H1 (cell line): ENCODE measurements at regions of chr9 and their contacts with region 1.

Region 1: DNA sequence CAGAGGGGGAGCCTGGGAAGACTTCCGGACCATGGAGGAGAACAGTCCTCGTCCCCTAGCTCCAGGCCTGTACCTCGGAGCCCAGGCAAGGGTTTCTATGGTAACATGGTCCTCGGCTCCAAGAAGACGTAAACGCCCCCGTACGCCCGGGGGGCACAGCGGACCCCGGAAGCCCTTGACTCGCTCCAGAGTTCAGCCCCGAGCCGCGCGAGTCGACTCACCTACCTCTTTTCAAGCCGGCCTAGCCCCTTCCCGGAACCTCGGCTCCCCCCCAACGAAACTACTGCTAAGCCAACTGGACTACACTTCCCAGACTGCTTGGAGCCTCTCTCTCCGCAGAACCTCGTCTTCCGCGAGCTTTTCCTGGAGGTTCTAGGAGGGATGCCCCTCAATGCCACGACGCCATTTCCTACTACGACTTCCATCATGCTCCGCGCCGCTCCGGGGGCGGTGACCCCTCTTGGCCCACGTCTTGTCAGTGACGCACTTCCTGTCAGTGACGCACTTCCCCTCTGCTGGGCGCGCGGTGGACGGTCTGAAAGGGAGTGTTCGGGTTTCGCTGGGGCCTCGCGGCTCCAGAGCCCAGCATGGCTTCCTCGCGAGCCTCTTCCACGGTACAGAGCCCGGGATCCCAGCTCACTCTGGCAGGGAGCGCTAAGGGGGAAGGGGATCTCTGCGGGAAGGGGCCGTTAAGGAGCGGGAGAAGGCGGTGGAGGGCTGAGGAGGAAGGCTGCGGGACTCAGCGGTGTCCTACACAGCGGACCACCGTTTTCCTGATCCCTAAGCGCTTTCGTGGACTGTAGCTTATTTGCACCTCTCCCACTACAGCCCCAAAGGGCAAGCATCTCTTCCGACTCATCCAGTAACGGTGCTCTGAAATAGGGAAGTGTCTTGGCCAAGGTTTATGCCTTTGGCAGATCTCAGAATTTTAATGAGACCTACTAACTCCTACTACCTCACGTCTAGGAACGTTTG is at the starts of genes CDC26 and PRPF4:
- DNase-seq: peak; percentile 89 to 92
- H3K4me3 ChIP-seq: peak within 1 kb of the TSS; percentile 68 to 98 (median 90)
- H3K27ac ChIP-seq: peak within 1 kb of the TSS; percentile 93
- H3K4me1 ChIP-seq: peaks cover 0 to 4% (median 0%) of the 10 kb centered on the region in 4 experiments; a peak in 1 of 7 replicates
- H3K27me3 ChIP-seq: no peaks in the 10 kb centered on the region
- CTCF ChIP-seq: no peak
- EP300 ChIP-seq: no peak
- POLR2A ChIP-seq: peak; percentile 93 to 96
- RAD21 ChIP-seq: no peak
- total RNA-seq, gene CDC26: 41.9 and 42.8 TPM in 2 replicates
- total RNA-seq, gene PRPF4: 33.4 and 36.8 TPM in 2 replicates

Region 2: DNA sequence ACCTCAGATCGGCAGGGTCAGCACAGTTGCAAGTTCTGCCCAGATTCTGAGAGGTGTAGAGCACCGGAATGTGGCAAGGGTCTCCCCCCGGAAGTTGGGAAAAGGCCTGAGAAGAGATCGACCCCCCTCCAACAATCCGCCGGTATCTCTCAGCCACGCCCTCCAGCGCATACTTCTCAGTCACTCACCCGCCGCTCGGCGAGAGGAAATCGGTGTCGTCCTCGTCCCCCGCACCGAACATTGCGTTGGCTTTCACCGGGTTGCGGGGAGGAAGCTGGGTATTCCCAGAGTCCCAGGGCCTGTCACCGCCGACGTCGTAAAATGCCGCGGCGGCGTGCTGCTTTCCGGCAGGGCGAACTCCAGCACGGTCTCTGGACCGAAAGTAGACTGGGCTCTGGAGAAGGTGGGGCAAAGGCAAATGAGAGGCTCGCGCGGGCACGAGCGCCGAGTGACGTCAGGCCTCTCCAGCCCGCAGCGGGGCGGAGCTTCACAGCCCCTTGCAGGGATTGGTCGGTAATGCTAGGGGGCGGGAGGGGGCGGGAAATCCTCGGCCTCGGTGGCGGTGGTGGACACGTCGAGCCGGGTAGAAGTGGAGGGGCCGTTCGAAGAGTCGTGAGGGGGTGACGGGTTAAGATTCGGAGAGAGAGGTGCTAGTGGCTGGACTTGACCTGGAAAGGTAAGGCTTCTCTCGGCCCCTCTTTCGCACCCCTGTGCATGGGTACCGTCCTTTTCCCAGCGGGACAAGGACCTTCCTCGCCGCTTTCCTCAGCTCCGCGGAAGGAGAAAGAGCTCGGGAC is 54.2 kb before region 1 on chr9 and contains the starts of genes FKBP15 and SLC31A1:
- CTCF ChIA-PET with region 1: interaction called, 10 read pairs
- POLR2A ChIA-PET with region 1: interaction called, 10 read pairs
- DNase-seq: peak; percentile 95 to 98
- H3K4me3 ChIP-seq: peak within 1 kb of the TSS; percentile 93 to 96 (median 94)
- H3K27ac ChIP-seq: peak within 1 kb of the TSS; percentile 71; the same call in 1 of the 2 replicates
- H3K4me1 ChIP-seq: peaks cover 0 to 10% (median 1%) of the 10 kb centered on the region in 4 experiments; a peak in 4 of 7 replicates
- H3K27me3 ChIP-seq: no peaks in the 10 kb centered on the region
- CTCF ChIP-seq: no peak
- EP300 ChIP-seq: no peak
- POLR2A ChIP-seq: peak; percentile 46 to 83
- RAD21 ChIP-seq: no peak
- total RNA-seq, gene FKBP15: 13.8 and 13.9 TPM in 2 replicates
- total RNA-seq, gene SLC31A1: 40.7 and 40.8 TPM in 2 replicates

Region 3: DNA sequence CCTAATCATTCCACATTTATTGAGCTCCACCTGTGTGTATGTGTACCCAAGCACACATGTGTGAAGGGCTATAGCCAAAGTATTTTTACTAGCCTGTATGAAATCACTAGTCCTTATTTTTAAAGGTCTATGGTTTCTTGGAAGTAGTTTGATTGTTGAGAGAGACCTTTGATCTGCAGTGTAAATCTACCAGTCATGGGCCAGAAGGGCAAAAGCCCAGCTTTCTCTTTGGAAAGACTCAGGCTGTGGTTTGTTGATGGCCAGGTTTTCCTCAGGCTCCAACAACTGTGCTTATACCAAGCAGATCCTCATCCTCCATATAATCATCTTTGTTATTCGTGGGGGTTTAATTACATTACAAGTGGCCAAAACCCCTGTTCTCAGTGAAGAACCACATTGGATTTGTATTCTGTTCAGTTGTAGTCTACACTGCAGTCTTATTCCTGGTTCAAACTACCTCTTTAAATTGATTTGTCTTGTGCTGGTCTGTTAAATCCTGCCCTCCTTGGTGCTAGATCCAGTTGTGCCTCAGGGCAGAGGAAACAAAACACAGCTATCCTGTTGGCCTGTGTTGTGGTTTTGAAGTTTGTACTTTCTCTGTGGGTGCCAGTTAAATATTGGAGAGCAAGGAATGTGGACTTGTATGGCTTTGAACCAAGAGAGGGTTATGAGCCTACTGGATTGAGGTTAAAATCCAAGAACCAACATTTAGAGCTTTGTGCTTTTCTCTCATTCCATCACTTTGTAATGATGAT is 13.3 kb before region 1 on chr9:
- CTCF ChIA-PET with region 1: interaction called, 22 read pairs
- POLR2A ChIA-PET with region 1: interaction called, 9 read pairs
- DNase-seq: no peak
- H3K4me3 ChIP-seq: no peak overlapping the region
- H3K27ac ChIP-seq: no peak overlapping the region
- H3K4me1 ChIP-seq: no peaks in the 10 kb centered on the region
- H3K27me3 ChIP-seq: no peaks in the 10 kb centered on the region
- CTCF ChIP-seq: no peak
- EP300 ChIP-seq: no peak
- POLR2A ChIP-seq: no peak
- RAD21 ChIP-seq: no peak

Region 4: GRCh38 chr9:113349445-113350094 is 74.1 kb after region 1 on chr9 and contains the start of gene BSPRY:
- CTCF ChIA-PET with region 1: interaction called, 11 read pairs
- POLR2A ChIA-PET with region 1: interaction called, 4 read pairs
- DNase-seq: peak in 1 of 2 experiments; percentile 76
- H3K4me3 ChIP-seq: peak within 1 kb of the TSS; percentile 75 to 89 (median 76)
- H3K27ac ChIP-seq: no peak within 1 kb of the TSS
- H3K4me1 ChIP-seq: peaks cover 5 to 14% (median 10%) of the 10 kb centered on the region in 4 experiments
- H3K27me3 ChIP-seq: peaks cover 0 to 14% (median 2%) of the 10 kb centered on the region in 4 experiments; a peak in 5 of 7 replicates
- CTCF ChIP-seq: no peak
- EP300 ChIP-seq: no peak
- POLR2A ChIP-seq: peak in 1 of 2 experiments; percentile 49; a peak in 1 of 3 replicates
- RAD21 ChIP-seq: 0 out of 4 replicates have a peak, but pooled peaks of 1 of the 2 experiments have one; percentile 0
- total RNA-seq, gene BSPRY: 5.5 and 6.5 TPM in 2 replicates

Region 5: GRCh38 chr9:113410207-113410864 is 134.9 kb after region 1 on chr9 and contains the starts of genes C9orf43 and POLE3:
- CTCF ChIA-PET with region 1: interaction called, 17 read pairs
- POLR2A ChIA-PET with region 1: interaction called, 12 read pairs
- DNase-seq: peak; percentile 78 to 94
- H3K4me3 ChIP-seq: peak within 1 kb of the TSS; percentile 59 to 100 (median 96)
- H3K27ac ChIP-seq: peak within 1 kb of the TSS; percentile 97
- H3K4me1 ChIP-seq: peaks cover 0 to 10% (median 4%) of the 10 kb centered on the region in 4 experiments; a peak in 1 of 7 replicates
- H3K27me3 ChIP-seq: no peaks in the 10 kb centered on the region
- CTCF ChIP-seq: no peak
- EP300 ChIP-seq: no peak
- POLR2A ChIP-seq: peak; percentile 90
- RAD21 ChIP-seq: peak in 1 of 2 experiments; percentile 9; a peak in 1 of 4 replicates
- total RNA-seq, gene C9orf43: 0.36 and 0.52 TPM in 2 replicates
- total RNA-seq, gene POLE3: 49.1 and 52.7 TPM in 2 replicates